HepG2 (cell line): ENCODE measurements at regions of chr3 and their contacts with region 1.

Region 1: GRCh38 chr3:146589899-146590508 is 15.1 kb downstream of the PLSCR5 start:
- DNase-seq: peak; percentile 52
- ATAC-seq: no peak
- H3K4me3 ChIP-seq: no peak overlapping the region
- H3K27ac ChIP-seq: no peak overlapping the region
- H3K4me1 ChIP-seq: peaks cover 16% of the 10 kb centered on the region
- H3K27me3 ChIP-seq: no peaks in the 10 kb centered on the region
- CTCF ChIP-seq: peak; percentile 68
- EP300 ChIP-seq: no peak
- POLR2A ChIP-seq: no peak
- RAD21 ChIP-seq: peak; percentile 25; the same call in 1 of the 2 replicates

Region 2: GRCh38 chr3:146625117-146625775 is 35.2 kb after region 1 on chr3:
- CTCF ChIA-PET with region 1: no interaction called
- POLR2A ChIA-PET with region 1: no interaction called
- in situ Hi-C with region 1: loop called (anchors 5 kb)
- intact Hi-C with region 1: no loop called
- DNase-seq: no peak
- ATAC-seq: no peak
- H3K4me3 ChIP-seq: no peak overlapping the region
- H3K27ac ChIP-seq: no peak overlapping the region
- H3K4me1 ChIP-seq: peaks cover 41% of the 10 kb centered on the region
- H3K27me3 ChIP-seq: no peaks in the 10 kb centered on the region; a peak in 1 of 5 replicates
- CTCF ChIP-seq: no peak
- EP300 ChIP-seq: no peak
- POLR2A ChIP-seq: no peak
- RAD21 ChIP-seq: no peak

Region 3: DNA sequence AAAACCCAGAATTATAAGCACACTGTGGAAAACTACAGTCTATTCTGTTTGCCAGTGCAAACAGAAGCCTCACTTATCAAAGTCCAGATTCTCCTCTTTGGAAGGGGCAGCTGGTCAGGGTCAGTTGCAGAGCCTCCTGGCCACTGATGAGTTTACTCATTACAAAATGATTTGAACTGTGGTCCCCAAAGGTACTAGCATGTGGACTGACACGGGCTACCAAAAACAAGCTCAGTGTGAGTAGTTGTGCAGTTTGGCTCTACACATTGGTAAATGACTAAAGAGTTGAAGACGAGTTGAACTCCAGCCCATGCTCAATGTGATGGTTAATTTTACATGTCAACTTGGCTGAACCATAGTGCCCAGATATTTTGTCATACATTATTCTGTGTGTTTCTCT is 594.8 kb after region 1 on chr3:
- CTCF ChIA-PET with region 1: no interaction called
- POLR2A ChIA-PET with region 1: no interaction called
- in situ Hi-C with region 1: no loop called
- intact Hi-C with region 1: loop called (anchors 2 kb)
- DNase-seq: peak; percentile 91
- ATAC-seq: peak; percentile 100
- H3K4me3 ChIP-seq: no peak overlapping the region; a peak in 1 of 6 replicates
- H3K27ac ChIP-seq: peak overlapping the region; percentile 70
- H3K4me1 ChIP-seq: peaks cover 60% of the 10 kb centered on the region
- H3K27me3 ChIP-seq: no peaks in the 10 kb centered on the region
- CTCF ChIP-seq: no peak
- EP300 ChIP-seq: peak in 1 of 2 experiments; percentile 94; a peak in 2 of 4 replicates
- POLR2A ChIP-seq: no peak
- RAD21 ChIP-seq: 0 out of 2 replicates have a peak, but pooled peaks have one; percentile 18